ENCODE measurements at regions of chrX and their contacts with region 1.

Region 1: GRCh38 chrX:10615931-10616775 is 4.2 kb downstream of the MID1 start:
- DNase-seq: peak; percentile 66
- H3K4me3 ChIP-seq: no peak overlapping the region
- H3K27ac ChIP-seq: no peak overlapping the region
- H3K4me1 ChIP-seq: peaks cover 23% of the 10 kb centered on the region
- H3K27me3 ChIP-seq: no peaks in the 10 kb centered on the region
- CTCF ChIP-seq: peak; percentile 53 to 59
- POLR2A ChIP-seq: no peak

Region 2: DNA sequence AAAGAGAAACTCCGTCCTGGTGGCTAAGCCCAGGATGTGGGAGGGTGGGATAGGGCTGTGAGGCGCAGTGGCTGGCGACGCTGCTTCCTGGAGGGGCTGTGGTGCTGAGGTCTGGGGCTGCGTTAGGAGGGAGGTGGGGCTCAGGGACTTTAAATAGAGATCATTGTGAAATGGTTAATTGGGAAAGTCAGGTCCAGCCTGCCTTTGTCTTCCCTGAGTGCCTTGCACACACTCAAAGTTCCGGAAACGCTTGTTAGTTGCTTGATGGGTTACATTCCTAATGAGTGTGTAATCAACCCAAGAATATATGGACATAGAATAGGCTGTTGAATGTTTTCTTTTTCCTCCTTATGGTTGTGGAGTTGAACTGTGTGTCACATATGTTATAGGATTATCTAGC is 704.7 kb before region 1 on chrX:
- CTCF ChIA-PET with region 1: no interaction called
- POLR2A ChIA-PET with region 1: no interaction called
- dilution Hi-C with region 1: no loop called
- intact Hi-C with region 1: no loop called
- DNase-seq: peak; percentile 58
- H3K4me3 ChIP-seq: no peak overlapping the region
- H3K27ac ChIP-seq: peak overlapping the region; percentile 78
- H3K4me1 ChIP-seq: peaks cover 16% of the 10 kb centered on the region
- H3K27me3 ChIP-seq: no peaks in the 10 kb centered on the region
- CTCF ChIP-seq: no peak
- POLR2A ChIP-seq: no peak

Region 3: DNA sequence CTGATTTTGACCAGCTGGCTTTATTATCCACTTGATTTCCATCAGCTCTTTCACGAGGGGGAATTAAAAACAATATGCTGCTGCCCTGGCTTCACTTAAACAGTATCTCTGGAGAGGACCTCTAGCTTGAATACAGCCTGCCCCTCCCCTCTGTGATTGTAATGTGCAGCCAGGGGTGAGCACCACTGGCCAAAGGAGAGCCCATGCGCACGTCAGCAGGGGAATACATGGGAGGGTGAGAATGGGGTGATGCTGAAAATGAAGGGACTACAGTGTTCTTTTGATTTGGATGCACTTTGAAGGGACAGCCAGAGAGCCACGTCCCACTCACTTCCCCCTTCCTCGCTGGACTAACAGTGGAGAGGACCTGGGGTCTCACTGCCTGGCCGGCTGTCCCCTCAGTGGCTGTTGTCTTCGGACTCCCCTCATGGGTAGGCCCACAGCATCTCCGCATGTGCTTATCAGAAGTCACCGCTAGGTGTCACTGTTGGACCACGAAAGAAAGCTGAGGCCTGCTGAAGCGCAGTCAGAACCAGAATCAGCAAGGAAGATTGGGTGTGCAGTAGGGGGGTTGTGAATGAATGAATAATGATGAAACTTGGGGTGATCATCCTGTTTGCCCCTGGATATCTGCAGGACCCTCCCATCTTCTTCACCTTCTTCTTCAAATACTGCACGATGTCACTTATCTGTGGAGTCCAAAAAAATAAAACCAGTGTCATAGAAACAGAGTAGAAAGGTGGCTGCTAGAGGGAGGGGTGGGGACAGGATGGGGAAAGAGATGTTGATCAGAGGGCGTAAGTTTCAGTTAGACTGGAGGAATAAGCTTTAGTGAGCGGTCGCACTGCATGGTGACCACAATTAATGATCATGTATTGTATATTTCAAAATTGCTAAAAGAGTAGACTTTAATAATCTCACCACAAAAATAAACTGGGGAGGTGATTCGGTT is 426.6 kb before region 1 on chrX:
- CTCF ChIA-PET with region 1: interaction called, 18 read pairs
- POLR2A ChIA-PET with region 1: no interaction called
- dilution Hi-C with region 1: no loop called
- intact Hi-C with region 1: loop called (anchors 1 kb)
- DNase-seq: peak; percentile 67
- H3K4me3 ChIP-seq: no peak overlapping the region
- H3K27ac ChIP-seq: peak overlapping the region; percentile 49
- H3K4me1 ChIP-seq: peaks cover 4% of the 10 kb centered on the region
- H3K27me3 ChIP-seq: no peaks in the 10 kb centered on the region
- CTCF ChIP-seq: peak; percentile 48 to 53
- POLR2A ChIP-seq: no peak

Region 4: DNA sequence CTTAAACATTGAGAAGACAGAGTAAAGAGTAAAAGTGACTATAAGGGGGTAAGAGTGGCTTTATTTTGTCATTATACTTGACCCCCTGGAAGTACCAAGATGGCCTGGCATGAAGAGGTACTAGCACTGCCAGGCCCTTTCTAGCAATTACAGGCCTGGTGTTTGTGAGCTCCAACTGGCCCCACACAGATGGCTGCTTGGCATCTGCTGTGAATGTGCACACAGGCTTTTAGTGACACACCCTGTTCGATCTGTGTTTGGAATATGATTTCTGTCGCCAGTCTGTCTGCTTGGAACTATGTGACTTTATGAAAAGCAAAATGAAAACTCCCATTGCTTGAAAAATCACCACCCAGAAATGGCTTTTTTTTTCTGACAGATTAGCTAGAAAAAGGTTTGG is 336.1 kb before region 1 on chrX:
- CTCF ChIA-PET with region 1: no interaction called
- POLR2A ChIA-PET with region 1: no interaction called
- dilution Hi-C with region 1: no loop called
- intact Hi-C with region 1: no loop called
- DNase-seq: no peak
- H3K4me3 ChIP-seq: no peak overlapping the region
- H3K27ac ChIP-seq: no peak overlapping the region
- H3K4me1 ChIP-seq: no peaks in the 10 kb centered on the region
- H3K27me3 ChIP-seq: no peaks in the 10 kb centered on the region
- CTCF ChIP-seq: no peak
- POLR2A ChIP-seq: no peak

Region 5: GRCh38 chrX:10444205-10444604 is 171.9 kb before region 1 on chrX:
- CTCF ChIA-PET with region 1: interaction called, 10 read pairs
- POLR2A ChIA-PET with region 1: no interaction called
- dilution Hi-C with region 1: no loop called
- intact Hi-C with region 1: loop called (anchors 5 kb)
- DNase-seq: peak; percentile 4
- H3K4me3 ChIP-seq: no peak overlapping the region
- H3K27ac ChIP-seq: no peak overlapping the region
- H3K4me1 ChIP-seq: peaks cover 2% of the 10 kb centered on the region
- H3K27me3 ChIP-seq: no peaks in the 10 kb centered on the region
- CTCF ChIP-seq: peak; percentile 11 to 17
- POLR2A ChIP-seq: no peak

Region 6: DNA sequence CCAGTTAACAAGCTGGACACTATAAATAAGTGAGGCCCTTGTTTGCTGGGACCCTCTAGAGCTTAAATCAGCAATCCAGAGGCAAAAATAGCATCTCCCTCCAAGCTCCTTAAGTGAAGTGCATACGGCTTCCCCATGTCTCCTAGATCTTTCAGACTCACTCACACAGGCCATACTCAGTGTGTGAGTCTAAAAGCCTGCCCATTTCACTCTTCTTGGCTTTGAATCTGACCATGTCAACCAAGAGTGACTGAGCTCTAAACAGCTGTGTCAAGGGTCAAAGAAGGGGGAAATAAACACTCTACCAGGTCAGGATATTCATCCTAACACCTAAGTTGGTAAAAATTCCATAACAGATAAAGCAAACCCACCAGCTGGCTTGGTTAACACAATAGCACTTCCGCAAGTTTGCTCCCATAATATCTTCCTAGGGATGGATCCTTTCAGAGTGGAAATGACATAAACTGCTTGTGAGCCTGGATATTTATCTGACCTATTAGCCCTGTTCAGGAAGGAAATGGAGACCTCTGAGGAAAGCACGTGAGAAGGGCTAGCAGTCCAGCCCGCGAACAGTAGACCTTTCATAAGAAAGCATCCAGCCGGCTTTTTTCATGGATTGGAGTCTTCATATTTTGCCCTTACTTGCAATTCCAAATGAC is 61.4 kb before region 1 on chrX:
- CTCF ChIA-PET with region 1: interaction called, 5 read pairs
- POLR2A ChIA-PET with region 1: no interaction called
- dilution Hi-C with region 1: no loop called
- intact Hi-C with region 1: loop called (anchors 2 kb)
- DNase-seq: peak; percentile 86
- H3K4me3 ChIP-seq: peak overlapping the region in 1 of 3 experiments; percentile 9
- H3K27ac ChIP-seq: peak overlapping the region; percentile 75
- H3K4me1 ChIP-seq: peaks cover 18% of the 10 kb centered on the region
- H3K27me3 ChIP-seq: no peaks in the 10 kb centered on the region
- CTCF ChIP-seq: no peak
- POLR2A ChIP-seq: no peak

Region 7: GRCh38 chrX:10597871-10598270 is 18.3 kb before region 1 on chrX:
- CTCF ChIA-PET with region 1: interaction called, 17 read pairs
- POLR2A ChIA-PET with region 1: no interaction called
- dilution Hi-C with region 1: no loop called
- intact Hi-C with region 1: loop called (anchors 2 kb)
- DNase-seq: peak; percentile 63
- H3K4me3 ChIP-seq: no peak overlapping the region
- H3K27ac ChIP-seq: no peak overlapping the region
- H3K4me1 ChIP-seq: no peaks in the 10 kb centered on the region
- H3K27me3 ChIP-seq: no peaks in the 10 kb centered on the region
- CTCF ChIP-seq: peak; percentile 46 to 63
- POLR2A ChIP-seq: no peak

Region 8: DNA sequence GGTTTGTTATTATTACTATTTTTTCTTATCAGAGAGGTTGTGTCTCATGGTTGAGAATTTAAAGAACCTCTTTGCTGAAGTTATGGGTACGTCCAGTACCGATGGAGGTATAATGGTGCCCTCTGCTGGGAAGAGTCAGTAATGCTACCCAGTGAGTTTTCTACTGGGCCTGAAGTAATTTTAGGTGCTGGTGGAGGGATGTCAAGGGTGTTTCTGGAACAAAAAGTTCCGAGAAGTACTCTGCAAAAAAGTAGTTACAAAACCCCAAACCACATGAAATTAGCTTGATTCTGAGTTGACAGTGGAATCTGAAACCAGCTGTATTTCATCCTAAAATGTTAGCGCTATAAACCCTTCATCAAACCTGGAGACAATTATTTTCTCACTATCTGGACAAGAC is 106.7 kb after region 1 on chrX:
- CTCF ChIA-PET with region 1: no interaction called
- POLR2A ChIA-PET with region 1: no interaction called
- dilution Hi-C with region 1: no loop called
- intact Hi-C with region 1: loop called (anchors 5 kb)
- DNase-seq: peak; percentile 54
- H3K4me3 ChIP-seq: no peak overlapping the region
- H3K27ac ChIP-seq: no peak overlapping the region
- H3K4me1 ChIP-seq: peaks cover 2% of the 10 kb centered on the region
- H3K27me3 ChIP-seq: no peaks in the 10 kb centered on the region
- CTCF ChIP-seq: peak; percentile 49 to 55
- POLR2A ChIP-seq: no peak

Measured in endothelial cell of umbilical vein (primary cell).